ENCODE measurements at regions of chr9 and their contacts with region 1.

Region 1: GRCh38 chr9:129166623-129167557 is 11.2 kb downstream of the IER5L start:
- DNase-seq: peak; percentile 57

Region 2: GRCh38 chr9:129125476-129125875 is 41.4 kb before region 1 on chr9:
- CTCF ChIA-PET with region 1: no interaction called
- POLR2A ChIA-PET with region 1: no interaction called
- DNase-seq: no peak

Region 3: GRCh38 chr9:129177791-129178559 is 11.1 kb after region 1 on chr9 and contains the start of gene IER5L:
- CTCF ChIA-PET with region 1: interaction called, 7 read pairs
- POLR2A ChIA-PET with region 1: interaction called, 14 read pairs
- DNase-seq: peak; percentile 97